ENCODE measurements at regions of chr10 and their contacts with region 1.

Region 1: GRCh38 chr10:69237528-69238159 is 17.5 kb downstream of the HKDC1 start:
- DNase-seq: peak; percentile 72 to 94 (median 86)
- ATAC-seq: peak; percentile 82
- H3K4me3 ChIP-seq: no peak overlapping the region
- H3K4me3 Mint-ChIP-seq: no peak overlapping the region
- H3K27ac ChIP-seq: no peak overlapping the region
- H3K27ac Mint-ChIP-seq: no peak overlapping the region
- H3K4me1 ChIP-seq: peaks cover 41% of the 10 kb centered on the region
- H3K4me1 Mint-ChIP-seq: peaks cover 26% of the 10 kb centered on the region
- H3K27me3 ChIP-seq: no peaks in the 10 kb centered on the region
- H3K27me3 Mint-ChIP-seq: no peaks in the 10 kb centered on the region
- CTCF ChIP-seq: peak; percentile 91

Region 2: GRCh38 chr10:69303632-69304051 is 66.0 kb after region 1 on chr10:
- CTCF ChIA-PET with region 1: no interaction called
- POLR2A ChIA-PET with region 1: no interaction called
- intact Hi-C with region 1: loop called in 1 of 2 experiments (anchors 5 kb)
- DNase-seq: no peak
- ATAC-seq: no peak
- H3K4me3 ChIP-seq: no peak overlapping the region
- H3K4me3 Mint-ChIP-seq: no peak overlapping the region
- H3K27ac ChIP-seq: no peak overlapping the region
- H3K27ac Mint-ChIP-seq: no peak overlapping the region
- H3K4me1 ChIP-seq: no peaks in the 10 kb centered on the region
- H3K4me1 Mint-ChIP-seq: no peaks in the 10 kb centered on the region
- H3K27me3 ChIP-seq: no peaks in the 10 kb centered on the region
- H3K27me3 Mint-ChIP-seq: no peaks in the 10 kb centered on the region
- CTCF ChIP-seq: no peak

Region 3: GRCh38 chr10:69318106-69318866 is 80.6 kb after region 1 on chr10:
- CTCF ChIA-PET with region 1: no interaction called
- POLR2A ChIA-PET with region 1: interaction called, 9 read pairs
- intact Hi-C with region 1: loop called in 1 of 2 experiments (anchors 5 kb)
- DNase-seq: peak; percentile 83 to 96 (median 90)
- ATAC-seq: peak; percentile 90
- H3K4me3 ChIP-seq: peak overlapping the region; percentile 80
- H3K4me3 Mint-ChIP-seq: peak overlapping the region; percentile 98
- H3K27ac ChIP-seq: peak overlapping the region; percentile 86 to 93
- H3K27ac Mint-ChIP-seq: peak overlapping the region; percentile 95
- H3K4me1 ChIP-seq: peaks cover 45% of the 10 kb centered on the region
- H3K4me1 Mint-ChIP-seq: peaks cover 42% of the 10 kb centered on the region
- H3K27me3 ChIP-seq: no peaks in the 10 kb centered on the region
- H3K27me3 Mint-ChIP-seq: no peaks in the 10 kb centered on the region
- CTCF ChIP-seq: no peak

Region 4: GRCh38 chr10:69360485-69361324 is 123.1 kb after region 1 on chr10:
- CTCF ChIA-PET with region 1: interaction called, 3 read pairs
- POLR2A ChIA-PET with region 1: interaction called, 3 read pairs
- intact Hi-C with region 1: loop called in 1 of 2 experiments (anchors 10 kb)
- DNase-seq: no peak
- ATAC-seq: no peak
- H3K4me3 ChIP-seq: peak overlapping the region; percentile 33
- H3K4me3 Mint-ChIP-seq: peak overlapping the region; percentile 79
- H3K27ac ChIP-seq: peak overlapping the region; percentile 33 to 55
- H3K27ac Mint-ChIP-seq: peak overlapping the region; percentile 94
- H3K4me1 ChIP-seq: peaks cover 52% of the 10 kb centered on the region
- H3K4me1 Mint-ChIP-seq: peaks cover 77% of the 10 kb centered on the region
- H3K27me3 ChIP-seq: no peaks in the 10 kb centered on the region
- H3K27me3 Mint-ChIP-seq: no peaks in the 10 kb centered on the region
- CTCF ChIP-seq: no peak

Region 5: GRCh38 chr10:69392481-69393000 is 154.9 kb after region 1 on chr10:
- CTCF ChIA-PET with region 1: interaction called, 48 read pairs
- POLR2A ChIA-PET with region 1: interaction called, 4 read pairs
- intact Hi-C with region 1: loop called (anchors 1 kb)
- DNase-seq: peak; percentile 73 to 91 (median 78)
- ATAC-seq: peak; percentile 100
- H3K4me3 ChIP-seq: no peak overlapping the region
- H3K4me3 Mint-ChIP-seq: no peak overlapping the region
- H3K27ac ChIP-seq: no peak overlapping the region
- H3K27ac Mint-ChIP-seq: peak overlapping the region; percentile 64
- H3K4me1 ChIP-seq: peaks cover 14% of the 10 kb centered on the region
- H3K4me1 Mint-ChIP-seq: peaks cover 25% of the 10 kb centered on the region
- H3K27me3 ChIP-seq: no peaks in the 10 kb centered on the region
- H3K27me3 Mint-ChIP-seq: no peaks in the 10 kb centered on the region
- CTCF ChIP-seq: peak; percentile 83

Region 6: DNA sequence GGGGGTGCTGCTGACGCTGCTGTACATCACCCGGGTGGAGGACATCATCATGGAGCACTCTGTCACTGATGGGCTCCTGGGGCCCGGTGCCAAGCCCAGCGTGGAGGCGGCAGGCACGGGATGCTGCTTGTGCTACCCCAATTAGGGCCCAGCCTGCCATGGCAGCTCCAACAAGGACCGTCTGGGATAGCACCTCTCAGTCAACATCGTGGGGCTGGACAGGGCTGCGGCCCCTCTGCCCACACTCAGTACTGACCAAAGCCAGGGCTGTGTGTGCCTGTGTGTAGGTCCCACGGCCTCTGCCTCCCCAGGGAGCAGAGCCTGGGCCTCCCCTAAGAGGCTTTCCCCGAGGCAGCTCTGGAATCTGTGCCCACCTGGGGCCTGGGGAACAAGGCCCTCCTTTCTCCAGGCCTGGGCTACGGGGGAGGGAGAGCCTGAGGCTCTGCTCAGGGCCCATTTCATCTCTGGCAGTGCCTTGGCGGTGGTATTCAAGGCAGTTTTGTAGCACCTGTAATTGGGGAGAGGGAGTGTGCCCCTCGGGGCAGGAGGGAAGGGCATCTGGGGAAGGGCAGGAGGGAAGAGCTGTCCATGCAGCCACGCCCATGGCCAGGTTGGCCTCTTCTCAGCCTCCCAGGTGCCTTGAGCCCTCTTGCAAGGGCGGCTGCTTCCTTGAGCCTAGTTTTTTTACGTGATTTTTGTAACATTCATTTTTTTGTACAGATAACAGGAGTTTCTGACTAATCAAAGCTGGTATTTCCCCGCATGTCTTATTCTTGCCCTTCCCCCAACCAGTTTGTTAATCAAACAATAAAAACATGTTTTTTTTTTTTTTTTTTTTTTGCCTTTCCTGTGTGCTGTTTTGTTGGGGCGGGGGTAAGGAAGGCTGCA is 269.4 kb after region 1 on chr10:
- CTCF ChIA-PET with region 1: interaction called, 5 read pairs
- POLR2A ChIA-PET with region 1: no interaction called
- intact Hi-C with region 1: loop called (anchors 1 to 2 kb)
- DNase-seq: peak in 3 of 14 experiments; percentile 53 to 71 (median 65)
- ATAC-seq: peak; percentile 20
- H3K4me3 ChIP-seq: peak overlapping the region; percentile 22
- H3K4me3 Mint-ChIP-seq: peak overlapping the region; percentile 46
- H3K27ac ChIP-seq: peak overlapping the region; percentile 19 to 59
- H3K27ac Mint-ChIP-seq: peak overlapping the region; percentile 85
- H3K4me1 ChIP-seq: peaks cover 18% of the 10 kb centered on the region
- H3K4me1 Mint-ChIP-seq: peaks cover 11% of the 10 kb centered on the region
- H3K27me3 ChIP-seq: no peaks in the 10 kb centered on the region
- H3K27me3 Mint-ChIP-seq: peaks cover 3% of the 10 kb centered on the region
- CTCF ChIP-seq: no peak

Region 7: GRCh38 chr10:69639291-69640195 is 401.9 kb after region 1 on chr10:
- CTCF ChIA-PET with region 1: no interaction called
- POLR2A ChIA-PET with region 1: no interaction called
- intact Hi-C with region 1: loop called in 1 of 2 experiments (anchors 5 kb)
- DNase-seq: peak; percentile 57 to 87 (median 66)
- ATAC-seq: peak; percentile 81
- H3K4me3 ChIP-seq: no peak overlapping the region
- H3K4me3 Mint-ChIP-seq: no peak overlapping the region
- H3K27ac ChIP-seq: no peak overlapping the region
- H3K27ac Mint-ChIP-seq: no peak overlapping the region
- H3K4me1 ChIP-seq: no peaks in the 10 kb centered on the region
- H3K4me1 Mint-ChIP-seq: no peaks in the 10 kb centered on the region
- H3K27me3 ChIP-seq: no peaks in the 10 kb centered on the region
- H3K27me3 Mint-ChIP-seq: no peaks in the 10 kb centered on the region
- CTCF ChIP-seq: peak; percentile 88

Region 8: GRCh38 chr10:69696073-69696731 is 458.6 kb after region 1 on chr10:
- CTCF ChIA-PET with region 1: no interaction called
- POLR2A ChIA-PET with region 1: no interaction called
- intact Hi-C with region 1: no loop called
- DNase-seq: peak in 3 of 14 experiments; percentile 8 to 22 (median 19)
- ATAC-seq: no peak
- H3K4me3 ChIP-seq: no peak overlapping the region
- H3K4me3 Mint-ChIP-seq: no peak overlapping the region
- H3K27ac ChIP-seq: no peak overlapping the region
- H3K27ac Mint-ChIP-seq: no peak overlapping the region
- H3K4me1 ChIP-seq: no peaks in the 10 kb centered on the region
- H3K4me1 Mint-ChIP-seq: no peaks in the 10 kb centered on the region
- H3K27me3 ChIP-seq: peaks cover 0 to 4% of the 10 kb centered on the region in 2 experiments
- H3K27me3 Mint-ChIP-seq: peaks cover 22% of the 10 kb centered on the region
- CTCF ChIP-seq: peak; percentile 31